A673 (cell line): ENCODE measurements at regions of chr17 and their contacts with region 1.

Region 1: GRCh38 chr17:12620200-12620720 is 45.4 kb upstream of the MYOCD start:
- DNase-seq: peak; percentile 14
- H3K4me3 ChIP-seq: no peak overlapping the region
- H3K27ac ChIP-seq: no peak overlapping the region
- H3K4me1 ChIP-seq: no peaks in the 10 kb centered on the region
- H3K27me3 ChIP-seq: no peaks in the 10 kb centered on the region
- CTCF ChIP-seq: no peak

Region 2: GRCh38 chr17:12744298-12744697 is 124.0 kb after region 1 on chr17:
- CTCF ChIA-PET with region 1: no interaction called
- POLR2A ChIA-PET with region 1: interaction called, 13 read pairs
- intact Hi-C with region 1: no loop called
- DNase-seq: no peak
- H3K4me3 ChIP-seq: no peak overlapping the region
- H3K27ac ChIP-seq: no peak overlapping the region
- H3K4me1 ChIP-seq: no peaks in the 10 kb centered on the region
- H3K27me3 ChIP-seq: no peaks in the 10 kb centered on the region
- CTCF ChIP-seq: no peak

Region 3: DNA sequence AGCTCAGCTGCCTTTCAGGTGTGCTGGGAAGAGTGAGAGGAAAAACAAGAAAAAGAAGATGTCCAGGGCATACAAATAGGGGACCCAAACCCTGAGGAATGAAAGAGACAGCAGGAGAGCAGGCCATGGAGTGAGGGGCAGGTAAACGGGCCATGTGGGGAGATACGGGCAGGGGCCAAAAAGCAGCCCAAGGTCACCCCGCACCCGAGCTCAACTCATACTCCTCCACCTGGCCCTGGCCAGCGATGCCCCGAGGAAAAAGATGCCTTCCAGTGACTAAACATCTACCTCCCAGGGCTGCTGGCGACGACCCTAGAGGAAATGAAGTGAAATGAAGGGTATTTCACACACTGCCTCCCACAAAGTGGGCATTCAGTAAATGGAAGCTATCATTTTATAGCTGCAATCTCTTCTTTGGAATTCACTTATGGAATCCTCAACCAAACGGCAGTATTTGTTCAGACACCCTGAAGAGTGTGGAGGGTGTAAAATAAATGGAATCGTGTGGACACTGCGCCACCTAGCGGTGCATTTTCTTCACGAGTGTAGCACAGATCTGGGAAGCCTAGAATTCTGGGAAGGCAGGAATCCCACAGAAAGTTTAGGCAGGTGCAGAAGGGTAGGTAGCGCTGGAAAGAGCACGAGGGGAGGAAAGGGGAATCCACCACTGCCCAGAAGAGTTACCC is 382.6 kb after region 1 on chr17:
- CTCF ChIA-PET with region 1: no interaction called
- POLR2A ChIA-PET with region 1: no interaction called
- intact Hi-C with region 1: no loop called
- DNase-seq: peak; percentile 80
- H3K4me3 ChIP-seq: no peak overlapping the region
- H3K27ac ChIP-seq: no peak overlapping the region
- H3K4me1 ChIP-seq: peaks cover 10% of the 10 kb centered on the region
- H3K27me3 ChIP-seq: no peaks in the 10 kb centered on the region
- CTCF ChIP-seq: peak; percentile 91